ENCODE measurements at regions of chr14 and their contacts with region 1.

Region 1: GRCh38 chr14:52840916-52841315 is 49.5 kb upstream of the GNPNAT1 start:
- DNase-seq: peak; percentile 72
- ATAC-seq: peak; percentile 100
- H3K4me3 ChIP-seq: no peak overlapping the region
- H3K27ac ChIP-seq: peak overlapping the region; percentile 28; the same call in 1 of the 2 replicates
- H3K4me1 ChIP-seq: peaks cover 14% of the 10 kb centered on the region
- H3K27me3 ChIP-seq: no peaks in the 10 kb centered on the region
- CTCF ChIP-seq: no peak

Region 2: GRCh38 chr14:52031781-52032180 is 809.1 kb before region 1 on chr14:
- CTCF ChIA-PET with region 1: no interaction called
- POLR2A ChIA-PET with region 1: no interaction called
- intact Hi-C with region 1: no loop called
- DNase-seq: no peak
- ATAC-seq: no peak
- H3K4me3 ChIP-seq: no peak overlapping the region
- H3K27ac ChIP-seq: no peak overlapping the region
- H3K4me1 ChIP-seq: peaks cover 9% of the 10 kb centered on the region
- H3K27me3 ChIP-seq: no peaks in the 10 kb centered on the region
- CTCF ChIP-seq: no peak

Region 3: DNA sequence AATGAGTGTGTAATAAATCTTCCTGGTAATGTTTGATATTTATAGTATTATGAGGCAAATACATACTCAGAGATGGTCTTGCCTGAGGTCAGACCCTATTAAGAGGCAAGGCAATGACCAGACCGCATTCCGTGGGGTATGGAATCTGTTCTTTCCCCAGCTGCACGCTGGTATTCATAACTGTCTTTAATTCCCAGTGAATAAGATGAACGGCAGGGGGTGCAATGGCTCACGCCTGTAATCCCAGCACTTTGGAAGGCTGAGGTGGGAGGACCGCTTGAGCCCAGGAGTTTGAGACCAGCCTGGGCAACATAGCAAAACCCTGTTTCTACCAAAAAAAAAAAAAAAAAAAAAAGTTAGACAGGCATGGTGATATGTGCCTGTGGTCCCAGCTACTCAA is 190.1 kb before region 1 on chr14:
- CTCF ChIA-PET with region 1: no interaction called
- POLR2A ChIA-PET with region 1: no interaction called
- intact Hi-C with region 1: no loop called
- DNase-seq: no peak
- ATAC-seq: no peak
- H3K4me3 ChIP-seq: no peak overlapping the region
- H3K27ac ChIP-seq: no peak overlapping the region
- H3K4me1 ChIP-seq: no peaks in the 10 kb centered on the region
- H3K27me3 ChIP-seq: no peaks in the 10 kb centered on the region
- CTCF ChIP-seq: peak; percentile 33; the same call in 1 of the 2 replicates

Region 4: GRCh38 chr14:52862632-52863335 is 21.9 kb after region 1 on chr14:
- CTCF ChIA-PET with region 1: no interaction called
- POLR2A ChIA-PET with region 1: interaction called, 40 read pairs
- intact Hi-C with region 1: no loop called
- DNase-seq: no peak
- ATAC-seq: no peak
- H3K4me3 ChIP-seq: no peak overlapping the region
- H3K27ac ChIP-seq: no peak overlapping the region
- H3K4me1 ChIP-seq: no peaks in the 10 kb centered on the region
- H3K27me3 ChIP-seq: no peaks in the 10 kb centered on the region
- CTCF ChIP-seq: no peak

Measured in PC-3 (cell line).